ENCODE measurements at regions of chr2 and their contacts with region 1.

Region 1: DNA sequence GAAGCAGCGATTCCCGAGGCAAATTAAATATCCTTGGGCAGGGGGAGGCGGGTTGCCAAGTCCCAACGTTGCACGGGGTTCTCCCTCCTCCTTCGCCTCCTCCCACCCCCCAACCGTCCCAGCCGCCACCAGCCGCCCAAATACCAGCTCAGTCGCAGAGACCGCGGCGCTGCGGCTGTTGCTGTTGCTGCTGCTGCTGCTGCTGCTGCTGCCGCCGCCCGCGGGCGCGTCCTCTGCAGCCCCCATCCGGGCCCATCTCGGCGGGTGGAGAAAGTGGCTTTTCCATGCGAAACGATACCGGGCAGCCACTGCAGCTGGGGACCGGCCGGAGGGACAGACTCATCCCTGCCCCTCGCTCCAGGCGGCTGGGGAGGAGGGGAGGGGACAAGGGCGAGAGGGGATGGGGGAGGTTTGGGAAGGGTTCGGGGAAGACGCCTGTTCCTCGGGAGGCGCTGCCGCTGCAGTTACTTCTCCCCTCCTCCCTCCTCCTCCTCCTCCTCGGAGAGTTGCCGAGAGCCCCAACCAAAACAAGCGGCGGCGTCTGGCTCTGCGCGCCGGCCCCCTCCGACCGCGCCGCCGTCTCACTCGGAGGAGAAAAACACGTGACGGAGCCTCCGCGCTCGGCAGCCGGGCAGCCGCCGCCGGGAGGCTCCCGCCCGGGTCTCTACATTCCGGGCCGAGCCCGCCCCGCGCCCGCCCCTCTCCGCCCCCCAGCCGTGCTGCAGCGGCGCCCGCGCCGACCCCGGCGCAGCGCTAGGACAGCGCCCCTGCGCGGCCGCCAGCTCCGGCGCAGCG is at the start of gene IRS1:
- DNase-seq: peak; percentile 67
- CTCF ChIP-seq: peak; percentile 59

Region 2: DNA sequence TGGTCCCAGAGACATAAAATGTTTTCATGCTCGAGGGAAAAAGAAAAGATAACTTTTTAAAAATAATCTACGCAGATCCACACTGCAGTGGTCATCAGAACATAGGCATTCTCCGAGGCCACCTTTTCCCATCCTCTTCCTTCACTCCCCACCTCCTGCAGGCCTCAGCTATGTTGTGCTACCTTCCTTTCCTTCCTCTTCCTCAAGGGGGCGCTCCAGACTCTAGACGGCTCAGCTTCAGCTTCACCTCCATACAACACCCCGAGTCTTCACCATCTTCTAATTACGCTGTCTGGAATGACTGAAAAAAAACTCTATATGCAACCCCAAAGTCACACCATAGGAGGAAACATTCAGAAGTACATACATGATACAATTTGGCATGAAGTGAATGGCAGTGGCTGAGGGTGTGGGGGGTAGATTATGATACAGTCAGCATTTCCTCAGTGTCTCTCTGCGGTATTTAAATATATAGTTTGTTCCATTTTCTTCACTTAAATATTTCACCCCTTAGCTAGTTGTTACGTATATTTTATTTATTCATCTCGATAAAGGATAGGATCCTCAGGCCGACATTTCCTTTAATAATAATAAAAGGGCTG is 583.4 kb before region 1 on chr2:
- CTCF ChIA-PET with region 1: interaction called, 38 read pairs
- POLR2A ChIA-PET with region 1: no interaction called
- DNase-seq: peak; percentile 19
- CTCF ChIP-seq: peak; percentile 68

Region 3: GRCh38 chr2:226818930-226819329 is 19.6 kb after region 1 on chr2:
- CTCF ChIA-PET with region 1: interaction called, 31 read pairs
- POLR2A ChIA-PET with region 1: interaction called, 6 read pairs
- DNase-seq: no peak
- CTCF ChIP-seq: no peak

Region 4: DNA sequence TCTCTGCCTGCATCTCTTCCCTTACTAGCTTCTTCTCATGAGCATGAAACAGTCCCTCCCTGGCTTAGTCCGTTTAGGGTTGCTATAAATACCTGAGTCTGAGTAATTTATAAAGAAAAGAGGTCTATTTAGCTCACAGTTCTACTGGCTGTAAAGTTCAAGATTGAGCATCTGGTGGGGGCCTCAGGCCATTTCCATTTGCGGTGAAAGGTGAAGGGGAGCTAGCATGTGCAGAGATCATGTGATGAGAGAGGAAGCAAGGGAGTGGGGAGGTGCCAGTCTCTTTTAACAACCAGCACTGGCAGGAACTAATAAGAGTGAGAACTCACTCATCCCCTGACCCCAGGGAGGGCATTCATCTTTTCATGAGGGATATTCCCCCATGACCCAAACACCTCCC is 63.2 kb after region 1 on chr2:
- CTCF ChIA-PET with region 1: interaction called, 10 read pairs
- POLR2A ChIA-PET with region 1: no interaction called
- DNase-seq: no peak
- CTCF ChIP-seq: no peak

Region 5: GRCh38 chr2:226994798-226995197 is 195.4 kb after region 1 on chr2:
- CTCF ChIA-PET with region 1: interaction called, 12 read pairs
- POLR2A ChIA-PET with region 1: no interaction called
- DNase-seq: no peak
- CTCF ChIP-seq: no peak

Measured in GM10248 (cell line).